Lower leg skin (tissue), 4 donors: ENCODE measurements at regions of chr7 and their contacts with region 1.

Region 1: DNA sequence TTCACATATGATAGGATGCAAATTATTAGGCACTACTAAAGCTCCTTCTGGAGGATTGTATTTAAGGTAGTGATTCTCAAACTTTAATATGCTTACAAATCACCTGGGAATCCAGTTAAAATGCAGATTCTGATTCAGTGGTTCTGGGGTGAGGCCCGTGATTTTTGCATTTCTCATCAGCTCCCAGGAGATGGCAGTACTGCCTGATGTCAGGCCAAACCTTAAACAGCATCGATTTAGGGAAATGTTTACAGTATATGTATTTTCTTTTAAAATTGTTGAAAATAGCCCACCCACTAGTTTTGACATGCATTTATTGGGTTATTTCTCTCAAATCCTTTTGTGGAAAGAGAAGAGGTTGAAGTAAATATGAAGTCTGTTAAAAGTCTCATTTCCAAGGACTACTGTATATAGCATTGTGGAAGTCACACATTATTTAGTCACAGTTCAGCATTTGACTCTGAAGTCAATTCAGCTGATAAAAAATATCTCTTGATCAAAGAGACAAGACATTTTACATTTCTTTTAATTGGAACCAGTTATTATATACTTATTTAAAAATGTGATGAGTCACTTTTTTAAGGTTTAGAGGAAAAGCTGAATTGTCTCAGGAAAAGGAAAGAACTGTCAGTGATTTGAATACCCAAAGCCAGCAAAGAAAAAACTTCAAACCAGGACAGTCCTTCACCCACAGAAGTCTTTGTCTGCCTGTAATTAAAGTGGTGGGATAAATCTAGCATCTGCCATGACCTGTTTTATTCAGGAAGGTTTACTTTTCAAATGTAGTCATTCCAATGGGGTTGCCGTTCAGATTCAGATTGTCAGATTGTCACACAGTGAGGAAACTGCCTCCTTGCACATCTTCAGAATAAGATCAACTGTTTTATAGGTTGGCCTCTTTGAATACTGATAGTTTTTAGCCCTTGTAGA is 21.1 kb upstream of the HBP1 start:
- DNase-seq: no peak
- H3K4me3 ChIP-seq: no peak overlapping the region
- CTCF ChIP-seq: no peak
- POLR2A ChIP-seq: no peak

Region 2: DNA sequence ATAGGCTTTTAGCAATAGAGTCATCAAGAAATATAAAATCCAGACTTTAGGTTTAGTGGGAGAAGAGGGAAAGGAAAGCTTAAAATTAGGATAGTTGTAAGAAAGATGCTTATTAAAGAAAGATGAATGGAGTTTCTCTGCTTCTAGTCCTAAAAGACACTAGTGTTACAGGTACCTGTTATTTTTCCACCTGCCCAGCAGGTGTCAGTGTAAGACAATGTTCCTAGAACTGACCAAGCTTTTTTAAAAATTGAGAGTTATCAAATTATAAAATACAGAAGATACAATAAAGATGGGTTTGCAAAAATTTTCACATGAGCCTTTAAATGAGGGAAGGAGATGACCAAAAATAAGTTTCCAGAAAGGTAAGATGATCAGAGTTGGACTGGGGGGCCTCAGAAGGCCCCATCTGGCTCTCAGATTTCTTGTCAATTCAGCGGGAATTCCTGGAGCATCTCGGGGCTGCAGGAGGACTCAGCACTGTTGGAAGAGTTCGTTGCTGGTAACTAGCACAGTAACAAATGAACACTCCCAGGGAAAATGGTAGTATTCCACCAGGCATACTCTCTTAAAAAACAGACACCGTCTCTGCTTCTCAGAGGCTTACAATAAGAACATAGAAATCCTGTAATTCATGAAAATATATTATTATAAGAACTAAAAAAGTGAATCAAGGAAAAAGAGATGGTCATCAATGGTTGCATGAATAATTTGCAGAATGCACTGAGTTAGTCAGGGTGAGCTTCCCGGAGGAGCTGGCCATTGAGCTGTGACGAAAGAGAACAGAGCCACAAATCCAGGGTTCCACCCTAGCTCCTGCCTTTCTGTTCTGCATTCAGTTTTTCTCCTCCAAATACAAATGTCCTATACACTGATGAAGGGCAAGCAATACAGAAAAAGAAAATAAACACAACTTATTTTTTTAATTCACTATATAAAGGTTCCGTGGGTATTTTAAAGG is 354.4 kb before region 1 on chr7:
- intact Hi-C with region 1: loop called (anchors 10 kb)
- DNase-seq: no peak
- H3K4me3 ChIP-seq: no peak overlapping the region
- CTCF ChIP-seq: no peak
- POLR2A ChIP-seq: no peak

Region 3: DNA sequence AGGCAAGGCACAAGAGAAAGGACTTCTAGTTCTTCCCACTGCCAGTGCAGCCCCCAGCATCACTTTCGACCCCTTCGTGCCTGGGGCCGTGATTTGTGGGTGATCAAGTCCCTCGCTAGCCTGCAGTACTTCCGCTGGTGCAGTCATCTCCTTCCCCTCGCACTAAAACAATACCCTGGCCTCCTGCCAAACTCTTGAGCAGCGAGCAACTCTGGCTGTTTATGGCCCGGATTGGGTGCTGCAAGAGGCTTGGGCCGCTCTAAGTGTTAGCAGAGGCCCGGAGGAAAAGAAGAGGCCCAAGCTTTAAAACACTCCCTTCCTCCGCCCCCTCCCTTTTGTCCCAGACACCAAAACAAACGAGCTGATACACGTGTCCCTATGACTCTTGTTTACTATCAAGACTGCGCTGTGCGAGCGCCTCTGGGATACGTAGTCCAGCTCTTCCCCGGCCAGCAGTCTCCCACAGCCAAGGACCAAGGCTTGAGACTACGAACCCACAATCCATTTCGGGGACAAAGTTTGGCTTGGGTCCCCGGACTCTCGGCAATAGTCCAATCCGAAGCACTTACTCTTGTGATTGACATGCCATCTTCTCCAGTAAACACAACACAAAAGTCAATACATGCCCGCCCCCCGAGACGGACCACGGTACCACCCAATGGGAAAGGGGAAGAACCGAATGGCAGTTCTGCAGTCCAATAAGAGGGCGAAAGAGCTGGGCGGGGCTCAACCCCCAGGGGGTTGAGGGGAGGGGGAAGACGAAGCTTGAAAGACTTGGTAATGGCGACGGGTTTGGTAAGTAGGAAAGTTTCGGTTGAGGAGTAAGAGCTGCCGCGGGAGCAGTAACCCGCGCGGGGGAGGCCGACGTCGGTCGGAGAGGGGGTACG is 20.7 kb after region 1 on chr7 and contains the start of gene HBP1:
- intact Hi-C with region 1: no loop called
- DNase-seq: peak; percentile 100
- H3K4me3 ChIP-seq: peak within 1 kb of the TSS; percentile 92
- CTCF ChIP-seq: no peak
- POLR2A ChIP-seq: peak in 1 of 2 donors; percentile 54
- total RNA-seq, gene HBP1: 144 to 232 (median 192) TPM